Cardiac septum (tissue), 1 donor: ENCODE measurements at regions of chr7 and their contacts with region 1.

Region 1: DNA sequence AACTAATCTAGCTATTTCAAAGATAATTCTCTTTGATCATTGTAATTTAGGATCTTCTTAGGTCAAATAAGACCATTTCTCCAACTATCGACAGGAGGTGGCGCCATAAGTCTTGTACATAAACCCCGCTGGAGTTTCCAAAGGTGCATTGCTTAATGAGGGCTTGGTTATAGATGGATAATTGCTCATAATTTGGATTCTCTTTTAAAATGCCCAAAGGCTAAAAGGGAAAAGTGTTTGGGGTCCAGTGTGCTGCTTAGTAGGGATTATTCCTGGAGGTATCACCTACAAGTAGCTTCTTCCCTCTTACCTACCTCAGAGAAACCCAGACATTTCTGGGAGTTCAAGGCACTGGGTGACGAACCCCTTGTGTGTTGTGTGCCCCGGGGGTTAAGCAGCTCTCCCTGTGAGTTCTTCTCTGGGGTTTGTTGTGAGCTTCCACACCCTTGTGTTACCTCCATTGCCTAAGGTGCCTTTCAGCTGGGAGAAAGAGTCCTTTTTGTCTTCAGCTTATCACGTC is 75.2 kb downstream of the PAXIP1 start:
- DNase-seq: no peak

Region 2: DNA sequence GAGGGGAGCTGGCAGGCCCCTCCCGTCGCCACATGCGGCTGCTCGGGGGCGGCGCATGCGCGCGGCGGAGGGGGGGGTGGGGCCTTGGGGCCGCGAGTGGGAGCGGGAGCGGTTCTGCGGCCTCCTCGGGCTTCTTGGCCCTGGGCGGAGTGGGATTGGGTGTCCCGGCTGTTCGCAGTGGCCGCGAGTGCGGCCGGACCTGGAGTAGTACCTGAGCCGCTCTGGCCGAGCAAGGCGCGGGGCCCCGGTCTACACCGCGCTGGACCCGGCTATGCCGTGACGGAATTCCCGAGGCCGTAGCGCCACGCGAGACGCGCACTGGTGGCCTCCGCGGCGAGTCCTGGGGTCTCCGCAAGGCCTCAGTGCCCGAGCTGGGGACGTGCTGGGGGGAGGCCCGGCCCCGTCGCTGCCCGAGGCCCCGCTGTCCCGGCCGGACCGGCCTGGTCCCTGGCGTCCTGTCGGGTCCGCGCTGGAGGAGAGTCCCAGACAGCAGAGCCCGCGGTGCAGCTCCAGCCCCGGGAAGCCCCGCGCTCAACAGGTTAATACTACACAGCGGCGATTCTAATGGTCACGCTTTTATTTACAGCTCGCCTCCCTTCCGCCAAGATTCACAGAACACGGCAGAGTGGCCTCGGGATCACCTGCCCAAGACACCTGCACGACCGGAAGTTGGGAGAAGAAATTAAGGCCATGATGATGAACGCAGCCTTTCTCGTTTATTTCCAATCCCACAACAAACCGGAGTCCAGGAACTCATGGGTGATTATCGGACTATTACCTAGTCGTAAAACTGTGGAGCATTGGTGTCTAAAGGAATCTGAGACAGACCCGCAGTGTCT is 75.9 kb after region 1 on chr7:
- intact Hi-C with region 1: loop called (anchors 5 kb)
- DNase-seq: peak; percentile 90

Region 3: DNA sequence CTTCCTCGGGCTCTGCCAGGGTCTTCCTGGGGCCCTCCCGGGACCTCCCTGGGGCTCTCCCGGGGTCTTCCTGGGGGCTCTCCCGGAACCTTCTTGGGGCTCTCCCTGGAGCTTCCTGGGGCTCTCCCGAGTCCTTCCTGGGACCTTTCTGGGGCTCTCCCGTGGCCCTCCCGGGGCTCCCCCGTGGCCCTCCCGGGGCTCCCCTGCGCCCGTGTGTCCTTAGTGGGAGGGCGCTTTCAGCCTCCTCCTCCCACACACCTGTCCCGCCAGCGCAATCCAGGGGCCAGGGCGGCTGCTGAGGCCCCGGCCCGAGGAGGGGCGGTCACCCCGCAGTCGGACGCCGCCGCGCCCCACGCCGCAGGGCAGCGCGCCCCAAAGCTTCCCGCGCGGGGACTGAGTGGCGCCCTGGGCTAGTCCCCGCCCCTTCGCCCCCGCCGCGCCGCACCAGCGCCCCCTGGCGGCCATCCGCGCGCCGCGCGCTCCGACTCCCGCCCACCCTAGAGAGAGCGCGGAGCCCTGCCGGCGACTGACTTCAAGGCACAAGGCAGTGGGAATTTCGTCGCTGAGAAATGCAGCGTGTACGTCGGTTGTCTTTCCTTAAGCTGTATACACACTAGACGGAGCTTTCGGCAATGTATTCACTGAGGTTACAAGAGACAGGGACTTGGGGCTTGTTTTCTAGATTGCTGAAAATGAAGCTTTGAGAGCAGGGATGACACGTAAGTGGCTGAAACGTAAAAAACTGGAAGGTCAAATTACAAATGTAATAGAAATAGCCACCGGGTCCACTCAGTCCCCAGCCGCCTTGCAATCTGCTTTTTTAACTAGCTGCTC is 417.1 kb after region 1 on chr7:
- intact Hi-C with region 1: loop called (anchors 5 kb)
- DNase-seq: peak; percentile 89

Region 4: GRCh38 chr7:155738652-155739537 is 811.2 kb after region 1 on chr7:
- intact Hi-C with region 1: loop called (anchors 10 kb)
- DNase-seq: peak; percentile 84